ENCODE measurements at regions of chr2 and their contacts with region 1.

Region 1: DNA sequence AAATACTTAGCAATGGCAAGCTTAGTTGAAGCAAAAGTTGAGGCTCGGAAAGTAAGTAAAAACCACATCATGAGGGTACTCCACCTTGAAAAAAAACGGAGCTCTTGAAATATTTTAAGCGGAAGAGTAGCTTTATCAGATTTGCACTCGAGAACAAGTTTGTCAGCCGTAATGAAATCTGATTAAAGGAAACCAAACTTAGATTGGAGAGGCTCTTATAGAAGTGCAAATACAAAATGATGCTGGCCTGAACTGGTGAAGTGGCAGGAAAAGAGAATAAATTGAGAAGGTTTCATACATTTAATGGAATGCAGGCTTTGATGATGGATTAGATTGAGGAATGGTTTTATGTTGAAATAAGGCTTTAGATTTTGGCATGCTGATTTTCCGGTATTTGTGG is 484.2 kb downstream of the PID1 start:
- DNase-seq: no peak
- ATAC-seq: no peak
- H3K4me3 ChIP-seq: no peak overlapping the region
- H3K27ac ChIP-seq: no peak overlapping the region
- H3K4me1 ChIP-seq: no peaks in the 10 kb centered on the region
- H3K27me3 ChIP-seq: no peaks in the 10 kb centered on the region
- CTCF ChIP-seq: no peak
- POLR2A ChIP-seq: no peak

Region 2: GRCh38 chr2:228731517-228731916 is 55.4 kb before region 1 on chr2:
- in situ Hi-C with region 1: no loop called
- intact Hi-C with region 1: no loop called
- DNase-seq: peak in 1 of 2 donors; percentile 25
- ATAC-seq: peak in 1 of 2 donors; percentile 44
- H3K4me3 ChIP-seq: no peak overlapping the region
- H3K27ac ChIP-seq: no peak overlapping the region
- H3K4me1 ChIP-seq: no peaks in the 10 kb centered on the region
- H3K27me3 ChIP-seq: no peaks in the 10 kb centered on the region
- CTCF ChIP-seq: no peak
- POLR2A ChIP-seq: no peak

Region 3: GRCh38 chr2:228839421-228839876 is 52.5 kb after region 1 on chr2:
- in situ Hi-C with region 1: no loop called
- intact Hi-C with region 1: loop called (anchors 10 kb)
- DNase-seq: peak in 1 of 2 donors; percentile 16
- ATAC-seq: peak; percentile 44 to 52
- H3K4me3 ChIP-seq: no peak overlapping the region
- H3K27ac ChIP-seq: peak overlapping the region in 3 of 4 donors; percentile 22 to 48 (median 46)
- H3K4me1 ChIP-seq: no peaks in the 10 kb centered on the region
- H3K27me3 ChIP-seq: no peaks in the 10 kb centered on the region
- CTCF ChIP-seq: no peak
- POLR2A ChIP-seq: no peak

Region 4: GRCh38 chr2:230205034-230205433 is 1418.1 kb after region 1 on chr2:
- in situ Hi-C with region 1: no loop called
- intact Hi-C with region 1: no loop called
- DNase-seq: no peak
- ATAC-seq: no peak
- H3K4me3 ChIP-seq: no peak overlapping the region
- H3K27ac ChIP-seq: no peak overlapping the region
- H3K4me1 ChIP-seq: no peaks in the 10 kb centered on the region
- H3K27me3 ChIP-seq: no peaks in the 10 kb centered on the region
- CTCF ChIP-seq: no peak
- POLR2A ChIP-seq: no peak

Measured in gastrocnemius medialis (tissue), 4 donors.